WTC11 (cell line): ENCODE measurements at regions of chr17 and their contacts with region 1.

Region 1: DNA sequence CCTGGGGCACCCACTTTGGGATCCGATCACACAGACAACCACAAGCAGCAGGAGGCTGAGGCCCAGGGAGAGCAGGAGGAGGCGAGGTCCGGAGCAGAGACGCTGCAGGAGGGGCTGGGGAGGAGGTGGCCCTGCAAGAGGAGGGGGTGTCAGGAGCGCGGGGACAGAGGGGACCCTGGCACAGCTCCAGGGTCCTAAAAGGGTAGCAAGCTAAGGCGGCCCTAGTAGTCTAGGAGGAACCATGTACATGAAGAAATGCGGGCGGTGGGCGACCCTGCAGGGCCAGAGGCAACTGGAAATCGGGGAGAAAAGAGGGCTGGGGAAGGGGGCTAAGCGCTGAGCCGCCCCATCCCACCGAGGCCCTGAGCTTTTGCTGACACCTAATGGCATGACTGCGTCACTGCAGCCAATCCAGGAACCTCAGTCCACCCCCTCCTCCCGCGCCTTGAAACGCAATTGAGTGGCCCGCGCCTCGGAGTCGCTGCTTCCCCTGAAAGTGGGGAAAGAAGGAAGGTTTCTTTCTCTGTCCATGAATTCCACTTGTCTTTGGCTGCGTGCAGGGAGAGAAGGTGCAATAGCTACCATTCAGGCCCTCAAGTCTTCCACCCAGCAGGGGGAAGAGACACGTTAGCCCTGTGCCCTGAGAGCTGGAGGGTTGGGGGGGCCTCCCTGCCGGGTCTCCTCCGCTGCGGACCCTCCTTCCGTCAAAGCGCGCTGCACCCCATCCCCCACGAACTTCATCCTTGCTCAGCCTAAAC is 1.8 kb downstream of the ASGR1 start:
- DNase-seq: peak; percentile 85
- ATAC-seq: peak; percentile 68
- H3K4me3 Mint-ChIP-seq: no peak overlapping the region
- H3K27ac Mint-ChIP-seq: peak overlapping the region; percentile 80; the same call in 1 of the 2 replicates
- H3K4me1 Mint-ChIP-seq: peaks cover 12% of the 10 kb centered on the region
- H3K27me3 Mint-ChIP-seq: peaks cover 10% of the 10 kb centered on the region
- CTCF ChIP-seq: peak; percentile 77

Region 2: DNA sequence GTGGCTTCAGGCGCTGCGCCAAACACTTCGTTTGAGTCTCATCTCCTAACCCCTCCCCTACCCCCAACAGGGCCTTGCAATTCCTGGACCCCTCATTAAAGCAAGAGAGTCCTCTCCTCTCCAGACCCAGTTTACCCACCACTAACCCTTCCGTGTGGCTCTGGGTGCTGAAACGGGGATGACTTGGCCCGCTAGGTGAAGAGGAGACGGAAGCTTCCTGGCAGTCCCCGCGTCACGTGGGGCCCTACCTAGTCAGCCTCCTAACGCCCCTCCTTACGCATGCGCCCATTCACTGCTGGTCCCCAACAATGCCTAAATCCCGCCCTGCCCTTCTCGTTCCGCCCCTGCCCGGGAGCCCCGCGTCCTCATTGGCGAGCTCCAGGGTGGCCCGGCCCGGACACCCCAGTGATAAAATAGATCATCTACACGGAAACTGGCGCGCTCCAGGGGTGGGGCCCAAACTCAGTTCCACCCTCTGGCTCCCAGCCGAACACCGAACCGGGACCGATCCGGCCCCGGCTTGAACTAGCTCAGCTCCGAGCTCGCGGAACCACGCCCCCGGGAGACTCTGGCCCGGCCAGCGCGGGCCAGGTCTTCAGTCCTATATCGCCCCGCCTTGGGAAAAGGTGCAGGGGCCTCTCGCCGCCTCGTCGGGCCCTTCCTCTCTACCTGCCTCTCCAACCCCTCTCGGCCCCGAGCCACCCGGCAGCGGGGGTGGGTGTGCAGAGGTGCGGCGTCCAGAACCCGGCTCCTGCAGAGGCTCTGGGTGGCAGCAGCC is 141.6 kb before region 1 on chr17 and contains the start of gene SLC16A13:
- CTCF ChIA-PET with region 1: interaction called, 15 read pairs
- POLR2A ChIA-PET with region 1: interaction called, 3 read pairs
- DNase-seq: peak; percentile 94
- ATAC-seq: peak; percentile 92
- H3K4me3 Mint-ChIP-seq: peak within 1 kb of the TSS; percentile 94
- H3K27ac Mint-ChIP-seq: peak within 1 kb of the TSS; percentile 87; the same call in 1 of the 2 replicates
- H3K4me1 Mint-ChIP-seq: peaks cover 20% of the 10 kb centered on the region
- H3K27me3 Mint-ChIP-seq: peaks cover 20% of the 10 kb centered on the region
- CTCF ChIP-seq: no peak
- total RNA-seq, gene SLC16A13: 5.2 to 7.1 TPM (median 6.9 TPM) in 3 replicates

Region 3: GRCh38 chr17:7130621-7131422 is 46.6 kb before region 1 on chr17:
- CTCF ChIA-PET with region 1: interaction called, 40 read pairs
- POLR2A ChIA-PET with region 1: no interaction called
- DNase-seq: no peak
- ATAC-seq: peak; percentile 10
- H3K4me3 Mint-ChIP-seq: peak overlapping the region; percentile 32; the same call in 1 of the 2 replicates
- H3K27ac Mint-ChIP-seq: peak overlapping the region; percentile 82
- H3K4me1 Mint-ChIP-seq: peaks cover 56% of the 10 kb centered on the region
- H3K27me3 Mint-ChIP-seq: peaks cover 61% of the 10 kb centered on the region
- CTCF ChIP-seq: no peak

Region 4: GRCh38 chr17:7147772-7148171 is 29.6 kb before region 1 on chr17:
- CTCF ChIA-PET with region 1: interaction called, 11 read pairs
- POLR2A ChIA-PET with region 1: no interaction called
- DNase-seq: no peak
- ATAC-seq: no peak
- H3K4me3 Mint-ChIP-seq: no peak overlapping the region
- H3K27ac Mint-ChIP-seq: no peak overlapping the region
- H3K4me1 Mint-ChIP-seq: peaks cover 17% of the 10 kb centered on the region
- H3K27me3 Mint-ChIP-seq: peaks cover 4% of the 10 kb centered on the region
- CTCF ChIP-seq: no peak

Region 5: DNA sequence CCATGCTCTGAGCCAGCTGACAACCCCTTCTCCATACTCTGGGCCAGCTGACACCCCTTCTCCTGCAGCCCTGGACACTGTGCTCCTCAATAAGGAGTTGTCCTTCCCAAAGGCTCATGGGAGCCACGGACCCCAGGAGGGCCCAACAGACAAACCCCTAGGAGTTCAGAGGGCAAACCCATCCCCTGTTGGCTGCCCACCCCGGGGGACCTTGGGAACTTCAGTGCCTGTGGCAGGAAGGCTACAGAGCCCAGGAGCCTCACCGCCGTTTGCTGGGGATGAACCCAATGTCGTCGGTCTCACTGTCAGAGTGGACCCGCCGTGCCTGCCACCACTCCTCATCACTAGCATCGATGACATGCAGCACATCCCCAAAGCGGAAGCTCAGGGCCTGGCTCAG is 16.7 kb after region 1 on chr17:
- CTCF ChIA-PET with region 1: interaction called, 10 read pairs
- POLR2A ChIA-PET with region 1: no interaction called
- DNase-seq: no peak
- ATAC-seq: no peak
- H3K4me3 Mint-ChIP-seq: no peak overlapping the region
- H3K27ac Mint-ChIP-seq: no peak overlapping the region
- H3K4me1 Mint-ChIP-seq: no peaks in the 10 kb centered on the region
- H3K27me3 Mint-ChIP-seq: no peaks in the 10 kb centered on the region
- CTCF ChIP-seq: no peak

Region 6: GRCh38 chr17:7214300-7215135 is 37.1 kb after region 1 on chr17:
- CTCF ChIA-PET with region 1: interaction called, 17 read pairs
- POLR2A ChIA-PET with region 1: no interaction called
- DNase-seq: peak; percentile 100
- ATAC-seq: peak; percentile 77
- H3K4me3 Mint-ChIP-seq: peak overlapping the region; percentile 86
- H3K27ac Mint-ChIP-seq: peak overlapping the region; percentile 98
- H3K4me1 Mint-ChIP-seq: peaks cover 61% of the 10 kb centered on the region
- H3K27me3 Mint-ChIP-seq: peaks cover 4% of the 10 kb centered on the region; the same call in 1 of the 2 replicates
- CTCF ChIP-seq: no peak

Region 7: GRCh38 chr17:7374353-7374752 is 197.0 kb after region 1 on chr17:
- CTCF ChIA-PET with region 1: no interaction called
- POLR2A ChIA-PET with region 1: no interaction called
- DNase-seq: no peak
- ATAC-seq: no peak
- H3K4me3 Mint-ChIP-seq: no peak overlapping the region
- H3K27ac Mint-ChIP-seq: no peak overlapping the region
- H3K4me1 Mint-ChIP-seq: peaks cover 5% of the 10 kb centered on the region
- H3K27me3 Mint-ChIP-seq: peaks cover 13% of the 10 kb centered on the region
- CTCF ChIP-seq: no peak